Panc1 (cell line): ENCODE measurements at regions of chrX and their contacts with region 1.

Region 1: DNA sequence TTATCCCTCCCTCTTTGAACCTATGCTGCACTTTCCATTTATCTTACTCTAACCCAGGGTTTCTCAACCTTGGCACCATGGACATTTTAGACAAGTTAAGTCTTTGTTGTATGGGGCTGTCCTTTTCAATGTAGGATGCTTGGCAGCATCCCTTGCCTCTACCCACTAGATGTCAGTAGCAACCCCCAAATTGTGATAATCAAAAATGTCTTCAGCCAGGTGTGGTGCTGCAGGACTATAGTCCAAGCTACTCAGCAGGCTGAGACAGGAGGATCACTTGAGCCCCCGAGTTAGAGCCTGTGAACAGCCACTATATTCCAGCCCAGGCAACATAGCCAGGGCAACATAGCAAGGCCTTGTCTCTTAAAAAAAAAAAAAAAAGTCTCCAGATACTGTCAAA is 7.0 kb downstream of the LRCH2 start:
- DNase-seq: peak; percentile 2
- ATAC-seq: peak; percentile 74
- H3K4me3 ChIP-seq: no peak overlapping the region
- H3K27ac ChIP-seq: no peak overlapping the region
- H3K4me1 ChIP-seq: no peaks in the 10 kb centered on the region
- H3K27me3 ChIP-seq: peaks cover 7% of the 10 kb centered on the region
- CTCF ChIP-seq: peak; percentile 62

Region 2: DNA sequence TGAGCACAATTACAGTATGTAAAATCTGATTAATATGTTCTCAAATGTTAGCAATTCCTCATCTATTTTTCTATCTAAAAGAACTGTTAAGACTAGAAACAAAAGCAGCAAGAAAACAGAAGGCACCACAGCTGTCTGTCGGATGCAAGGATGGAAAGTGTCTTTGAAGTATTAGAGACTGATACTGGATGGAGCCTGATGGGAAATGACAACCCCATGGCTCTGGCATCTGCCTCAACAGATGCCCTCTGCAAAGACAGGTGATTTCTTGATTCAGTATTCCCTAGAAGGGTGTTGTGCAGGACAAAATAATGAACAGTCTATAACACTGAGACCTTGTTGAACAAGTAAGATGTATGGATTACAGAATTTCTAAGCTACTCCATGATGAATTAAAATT is 12.8 kb before region 1 on chrX:
- CTCF ChIA-PET with region 1: no interaction called
- POLR2A ChIA-PET with region 1: no interaction called
- in situ Hi-C with region 1: no loop called
- intact Hi-C with region 1: no loop called
- DNase-seq: no peak
- ATAC-seq: no peak
- H3K4me3 ChIP-seq: no peak overlapping the region
- H3K27ac ChIP-seq: no peak overlapping the region
- H3K4me1 ChIP-seq: no peaks in the 10 kb centered on the region
- H3K27me3 ChIP-seq: no peaks in the 10 kb centered on the region
- CTCF ChIP-seq: no peak

Region 3: GRCh38 chrX:115284877-115285276 is 57.9 kb after region 1 on chrX:
- CTCF ChIA-PET with region 1: no interaction called
- POLR2A ChIA-PET with region 1: no interaction called
- in situ Hi-C with region 1: no loop called
- intact Hi-C with region 1: loop called (anchors 5 kb)
- DNase-seq: no peak
- ATAC-seq: no peak
- H3K4me3 ChIP-seq: no peak overlapping the region
- H3K27ac ChIP-seq: no peak overlapping the region
- H3K4me1 ChIP-seq: no peaks in the 10 kb centered on the region
- H3K27me3 ChIP-seq: no peaks in the 10 kb centered on the region
- CTCF ChIP-seq: no peak

Region 4: DNA sequence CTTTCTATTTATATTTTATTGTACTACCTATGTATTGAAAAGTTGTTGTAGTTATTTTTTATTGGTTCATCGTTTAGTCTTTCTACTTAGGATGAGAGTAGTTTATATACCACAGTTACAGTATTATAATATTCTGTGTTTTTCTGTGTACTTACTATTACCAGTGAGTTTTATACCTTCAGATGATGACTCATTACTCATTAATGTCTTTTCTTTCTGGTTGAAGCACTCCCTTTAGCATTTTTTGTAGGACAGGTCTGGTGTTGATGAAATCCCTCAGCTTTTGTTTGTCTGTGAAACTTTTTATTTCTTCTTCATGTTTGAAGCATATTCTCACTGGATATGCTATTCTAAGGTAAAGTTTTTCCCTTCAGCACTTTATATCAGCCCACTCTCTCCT is 70.3 kb after region 1 on chrX:
- CTCF ChIA-PET with region 1: no interaction called
- POLR2A ChIA-PET with region 1: no interaction called
- in situ Hi-C with region 1: no loop called
- intact Hi-C with region 1: no loop called
- DNase-seq: no peak
- ATAC-seq: no peak
- H3K4me3 ChIP-seq: no peak overlapping the region
- H3K27ac ChIP-seq: no peak overlapping the region
- H3K4me1 ChIP-seq: no peaks in the 10 kb centered on the region
- H3K27me3 ChIP-seq: no peaks in the 10 kb centered on the region
- CTCF ChIP-seq: no peak

Region 5: DNA sequence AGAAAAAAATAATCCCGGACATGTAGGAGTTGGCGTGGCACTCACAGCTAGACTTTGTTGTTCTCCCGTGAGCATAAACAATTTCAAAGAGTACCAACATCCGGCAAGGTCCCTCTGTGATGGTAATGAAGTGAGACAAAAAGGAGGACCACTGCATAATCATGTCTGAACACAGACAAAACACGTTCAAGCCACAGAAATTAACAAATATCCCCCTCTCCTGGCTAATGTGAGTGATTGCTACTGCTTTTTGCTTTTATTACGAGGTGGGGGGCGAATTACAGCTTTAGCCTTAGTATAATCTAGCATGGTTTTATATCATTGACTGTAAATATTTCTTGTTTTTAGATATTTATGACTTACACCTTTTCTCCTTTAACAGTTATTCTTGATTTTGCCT is 452.5 kb after region 1 on chrX:
- CTCF ChIA-PET with region 1: no interaction called
- POLR2A ChIA-PET with region 1: no interaction called
- in situ Hi-C with region 1: no loop called
- intact Hi-C with region 1: loop called (anchors 2 kb)
- DNase-seq: no peak
- ATAC-seq: no peak; the same call in 1 of the 2 replicates
- H3K4me3 ChIP-seq: no peak overlapping the region
- H3K27ac ChIP-seq: no peak overlapping the region
- H3K4me1 ChIP-seq: no peaks in the 10 kb centered on the region
- H3K27me3 ChIP-seq: no peaks in the 10 kb centered on the region
- CTCF ChIP-seq: peak; percentile 63